ENCODE measurements at regions of chr4 and their contacts with region 1.

Region 1: GRCh38 chr4:113383111-113383785 is 333.8 kb downstream of the ANK2 start:
- DNase-seq: no peak
- H3K4me3 ChIP-seq: no peak overlapping the region
- H3K27ac ChIP-seq: peak overlapping the region in 49 of 59 donors; percentile 2 to 81 (median 51)
- H3K27me3 ChIP-seq: no peaks in the 10 kb centered on the region
- CTCF ChIP-seq: no peak

Region 2: GRCh38 chr4:113106108-113106507 is 277.1 kb before region 1 on chr4:
- intact Hi-C with region 1: loop called in 1 of 2 experiments (anchors 10 kb)
- DNase-seq: no peak
- H3K4me3 ChIP-seq: peak overlapping the region in 1 of 59 donors; percentile 2
- H3K27ac ChIP-seq: peak overlapping the region in 38 of 59 donors; percentile 0 to 87 (median 42)
- H3K27me3 ChIP-seq: no peaks in the 10 kb centered on the region
- CTCF ChIP-seq: peak in 55 of 56 donors; percentile 30 to 80 (median 65)

Region 3: DNA sequence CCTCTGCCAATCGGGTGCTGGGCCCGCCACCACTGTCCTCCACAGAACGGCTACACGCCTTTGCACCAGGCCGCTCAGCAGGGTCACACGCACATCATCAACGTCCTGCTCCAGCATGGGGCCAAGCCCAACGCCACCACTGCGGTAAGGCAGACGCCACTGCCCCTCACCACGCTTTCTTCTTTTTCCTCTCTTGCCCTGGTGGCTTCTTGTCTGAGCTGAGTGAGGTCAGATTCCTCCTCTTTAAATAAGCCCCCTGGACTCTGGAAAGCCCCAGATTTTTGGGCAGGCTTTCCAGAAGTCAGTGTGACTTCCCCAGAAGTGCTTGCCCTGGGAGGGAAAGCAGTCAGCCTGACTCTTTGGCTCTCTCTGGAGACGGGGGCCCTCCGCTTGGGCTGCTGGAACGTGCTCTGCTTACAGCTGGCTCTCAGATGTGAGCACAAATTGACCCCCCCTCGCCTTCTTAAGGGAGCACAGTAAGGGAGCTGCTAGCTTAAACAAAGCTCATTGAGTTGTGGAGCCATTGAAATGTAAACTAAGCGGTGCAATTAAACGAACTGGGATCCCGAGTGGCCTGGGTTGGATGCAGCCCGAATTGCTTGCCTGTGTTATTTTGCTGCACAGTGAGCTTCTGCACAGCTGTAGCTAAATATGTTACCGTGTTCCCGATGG is 90.7 kb before region 1 on chr4:
- intact Hi-C with region 1: loop called in 1 of 2 experiments (anchors 10 kb)
- DNase-seq: peak; percentile 30 to 76 (median 64)
- H3K4me3 ChIP-seq: peak overlapping the region in 51 of 59 donors; percentile 1 to 53 (median 30)
- H3K27ac ChIP-seq: peak overlapping the region; percentile 36 to 91 (median 85)
- H3K27me3 ChIP-seq: no peaks in the 10 kb centered on the region
- CTCF ChIP-seq: peak in 1 of 56 donors; percentile 12